ENCODE measurements at regions of chr1 and their contacts with region 1.

Region 1: DNA sequence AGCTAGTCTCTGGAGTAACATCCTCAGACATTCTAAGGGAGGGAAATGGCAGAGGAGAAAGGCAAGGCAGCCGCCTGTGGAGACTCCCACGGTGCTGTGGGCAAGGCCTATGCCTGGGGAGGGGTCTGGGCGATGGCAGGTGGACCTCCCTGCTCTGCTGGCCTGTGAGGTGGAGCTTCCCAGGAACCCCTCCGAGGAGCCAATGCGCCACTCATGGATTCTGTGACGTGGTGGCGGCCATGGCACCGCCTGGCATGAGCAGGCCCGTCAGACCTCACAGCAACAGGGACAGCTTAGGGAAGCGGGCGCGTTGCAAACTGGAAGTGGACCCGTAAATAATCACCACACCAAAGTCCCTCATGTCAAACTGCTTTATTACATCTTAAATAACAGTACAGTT is 6.7 kb upstream of the NADK start:
- DNase-seq: no peak
- H3K4me3 ChIP-seq: no peak overlapping the region
- H3K27me3 ChIP-seq: no peaks in the 10 kb centered on the region
- CTCF ChIP-seq: no peak

Region 2: GRCh38 chr1:1732381-1732780 is 52.6 kb before region 1 on chr1:
- CTCF ChIA-PET with region 1: no interaction called
- POLR2A ChIA-PET with region 1: no interaction called
- DNase-seq: no peak
- H3K4me3 ChIP-seq: no peak overlapping the region
- H3K27me3 ChIP-seq: no peaks in the 10 kb centered on the region
- CTCF ChIP-seq: no peak

Region 3: DNA sequence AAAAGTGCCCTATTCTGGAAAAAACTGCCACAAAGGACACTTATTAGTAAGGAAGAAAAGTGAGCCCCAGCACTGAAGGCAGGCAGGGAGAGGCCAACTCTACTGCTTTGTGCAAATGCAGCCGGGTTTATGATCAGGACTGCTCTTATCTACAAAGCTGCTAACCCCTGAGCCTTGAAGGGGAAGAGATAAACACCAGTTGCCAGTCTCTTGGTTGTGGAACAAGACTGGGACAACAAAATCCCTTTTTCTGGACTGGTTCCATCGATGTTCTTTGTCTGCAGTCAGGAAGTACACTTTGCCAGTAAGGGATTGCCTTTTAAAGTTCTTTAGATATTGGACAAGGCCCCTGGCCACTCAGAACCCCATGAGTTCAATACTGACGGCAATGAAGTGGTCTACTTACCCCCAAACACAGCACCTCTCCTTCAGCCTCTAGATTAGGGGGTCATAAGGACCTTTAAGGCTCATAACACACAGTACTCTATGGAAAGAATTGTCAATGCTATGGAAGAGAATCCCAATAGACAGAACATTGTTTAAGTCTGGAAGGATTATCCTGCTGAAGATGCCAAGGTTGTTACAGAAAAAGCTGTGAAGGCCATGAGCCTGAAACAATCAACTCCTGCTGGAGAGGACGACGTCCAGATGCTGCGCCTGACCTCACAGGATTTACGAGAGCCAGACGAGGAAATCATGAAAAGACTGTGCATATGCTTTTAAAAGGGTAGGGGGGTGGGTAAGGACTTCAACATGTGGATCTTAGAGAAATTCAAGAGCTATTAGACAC is 62.3 kb after region 1 on chr1:
- CTCF ChIA-PET with region 1: no interaction called
- POLR2A ChIA-PET with region 1: interaction called, 11 read pairs
- DNase-seq: no peak
- H3K4me3 ChIP-seq: no peak overlapping the region
- H3K27me3 ChIP-seq: no peaks in the 10 kb centered on the region
- CTCF ChIP-seq: no peak

Measured in BJ (cell line).